CD8-positive, alpha-beta T cell (primary cell): ENCODE measurements at regions of chr1 and their contacts with region 1.

Region 1: DNA sequence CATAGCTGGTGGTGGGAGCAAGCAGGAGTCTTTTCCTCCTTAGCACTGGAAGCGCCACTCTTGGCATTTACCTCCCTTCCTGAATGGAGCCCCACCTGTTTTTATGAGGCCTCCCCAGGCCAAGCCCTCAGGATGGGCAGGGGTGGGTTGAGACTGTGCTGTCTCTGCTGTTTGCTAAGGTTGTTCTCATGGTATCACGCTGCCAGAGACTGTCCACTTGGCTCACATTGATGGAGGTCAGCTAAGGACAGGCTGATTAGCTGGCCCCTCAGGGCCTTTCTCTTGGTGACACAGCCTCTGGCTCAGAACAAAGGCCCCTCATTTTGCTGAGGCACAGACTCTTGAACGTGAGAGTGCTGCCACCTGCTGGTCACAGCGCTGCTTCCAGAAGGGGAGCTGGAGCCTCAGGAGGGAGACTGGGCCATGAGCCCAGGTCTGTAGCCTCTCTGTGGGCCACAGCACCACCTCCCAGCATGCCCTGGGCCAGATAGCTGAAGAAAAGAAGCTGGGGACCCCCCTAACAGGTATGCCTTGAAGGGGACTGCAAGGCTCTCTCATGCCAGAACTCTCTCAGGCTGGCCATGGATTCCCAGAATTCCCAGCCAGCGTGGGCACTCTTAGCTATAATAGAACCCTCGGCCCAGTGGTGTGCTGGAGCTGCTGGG is 85.6 kb downstream of the CD58 start:
- DNase-seq: peak; percentile 77 to 93 (median 87)
- ATAC-seq: peak; percentile 95
- H3K4me3 ChIP-seq: no peak overlapping the region
- H3K4me3 Mint-ChIP-seq: no peak overlapping the region
- H3K27ac ChIP-seq: no peak overlapping the region
- H3K27ac Mint-ChIP-seq: no peak overlapping the region
- H3K4me1 ChIP-seq: no peaks in the 10 kb centered on the region
- H3K4me1 Mint-ChIP-seq: no peaks in the 10 kb centered on the region
- H3K27me3 ChIP-seq: no peaks in the 10 kb centered on the region
- H3K27me3 Mint-ChIP-seq: no peaks in the 10 kb centered on the region
- CTCF ChIP-seq: peak; percentile 87

Region 2: DNA sequence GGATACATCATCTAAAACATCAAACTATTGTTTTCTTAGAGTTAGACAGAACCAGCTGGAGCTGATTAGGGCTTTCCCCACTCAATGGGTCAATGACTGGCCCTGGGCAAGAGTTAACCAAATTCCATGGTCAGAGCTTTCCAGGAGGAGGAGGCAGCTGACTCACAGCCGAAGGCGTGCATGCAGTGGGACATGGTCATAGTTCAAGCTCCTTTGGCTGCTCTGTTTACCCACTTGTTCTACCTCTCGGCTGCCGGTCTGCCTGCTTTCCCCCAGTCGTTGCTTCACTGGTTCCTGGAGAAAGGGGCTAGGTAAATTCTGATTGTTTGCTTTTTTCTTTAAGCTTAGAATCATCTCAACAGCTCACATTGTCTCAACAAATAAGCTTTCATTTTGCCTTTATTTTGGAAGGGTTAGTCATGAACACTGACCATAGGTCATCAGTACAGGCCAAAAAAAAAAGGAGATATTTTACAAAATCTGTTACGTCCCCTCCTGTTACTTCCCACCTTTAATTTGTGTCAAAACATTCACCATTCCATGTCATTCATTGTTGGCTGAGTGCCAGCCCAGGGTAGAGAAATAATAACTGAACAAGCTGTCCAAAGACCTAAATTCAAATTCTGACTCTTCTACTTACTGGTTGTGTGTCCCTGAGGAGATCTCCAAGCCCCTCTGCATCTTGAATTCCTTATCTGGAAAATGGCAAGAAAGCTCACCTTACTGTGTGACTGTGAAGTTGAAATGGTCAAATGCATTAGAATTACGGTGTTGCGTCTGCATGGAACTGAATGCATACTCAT is 362.0 kb before region 1 on chr1:
- CTCF ChIA-PET with region 1: interaction called, 22 read pairs
- POLR2A ChIA-PET with region 1: no interaction called
- intact Hi-C with region 1: no loop called
- DNase-seq: no peak
- ATAC-seq: no peak
- H3K4me3 ChIP-seq: no peak overlapping the region
- H3K4me3 Mint-ChIP-seq: no peak overlapping the region
- H3K27ac ChIP-seq: no peak overlapping the region
- H3K27ac Mint-ChIP-seq: no peak overlapping the region
- H3K4me1 ChIP-seq: peaks cover 23% of the 10 kb centered on the region
- H3K4me1 Mint-ChIP-seq: peaks cover 25% of the 10 kb centered on the region
- H3K27me3 ChIP-seq: no peaks in the 10 kb centered on the region
- H3K27me3 Mint-ChIP-seq: peaks cover 10% of the 10 kb centered on the region
- CTCF ChIP-seq: no peak

Region 3: DNA sequence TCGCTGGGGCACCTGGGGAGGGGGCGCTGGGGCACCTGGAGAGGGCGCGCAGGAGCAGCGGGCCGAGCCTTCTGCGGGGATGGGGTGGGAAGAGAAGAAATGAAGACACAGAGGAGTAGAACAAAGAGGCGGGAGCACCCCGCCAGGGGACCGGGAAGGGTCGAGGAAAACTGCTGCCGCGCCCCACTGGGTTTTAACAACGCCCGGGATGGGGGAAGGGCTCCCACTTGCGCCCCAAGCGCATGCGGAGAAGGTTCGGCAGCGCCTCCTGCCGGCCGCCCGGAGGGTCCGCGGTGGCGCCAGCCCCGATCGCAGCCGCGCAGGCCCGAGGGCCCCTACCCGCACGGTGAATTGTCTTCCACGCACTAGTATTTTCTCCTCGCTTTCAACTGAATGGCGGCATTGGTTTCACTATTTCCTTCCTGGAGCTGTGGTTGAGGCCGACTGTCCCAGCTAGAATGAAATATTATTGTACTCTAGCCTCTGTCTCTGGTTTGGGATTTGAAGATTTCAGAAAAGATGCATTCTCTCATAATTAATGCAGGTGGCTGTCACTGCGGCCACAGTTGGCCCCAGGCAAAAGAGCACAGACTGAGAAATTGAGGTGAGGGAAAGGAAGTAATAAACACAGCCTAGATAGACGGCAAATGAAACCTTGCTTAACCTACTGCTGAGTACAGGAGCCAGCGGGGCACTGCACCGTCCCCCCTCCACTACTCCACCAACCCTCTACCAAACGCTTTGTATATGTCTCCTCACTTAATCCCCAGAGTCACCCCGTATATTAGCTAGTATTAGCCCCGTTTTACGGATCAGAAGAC is 316.7 kb before region 1 on chr1:
- CTCF ChIA-PET with region 1: interaction called, 17 read pairs
- POLR2A ChIA-PET with region 1: no interaction called
- intact Hi-C with region 1: no loop called
- DNase-seq: peak; percentile 74 to 91 (median 86)
- ATAC-seq: peak; percentile 98
- H3K4me3 ChIP-seq: peak overlapping the region; percentile 61 to 88
- H3K4me3 Mint-ChIP-seq: peak overlapping the region; percentile 77
- H3K27ac ChIP-seq: peak overlapping the region; percentile 48 to 68
- H3K27ac Mint-ChIP-seq: peak overlapping the region; percentile 86
- H3K4me1 ChIP-seq: peaks cover 13% of the 10 kb centered on the region
- H3K4me1 Mint-ChIP-seq: peaks cover 12% of the 10 kb centered on the region
- H3K27me3 ChIP-seq: no peaks in the 10 kb centered on the region
- H3K27me3 Mint-ChIP-seq: no peaks in the 10 kb centered on the region
- CTCF ChIP-seq: peak; percentile 94

Region 4: DNA sequence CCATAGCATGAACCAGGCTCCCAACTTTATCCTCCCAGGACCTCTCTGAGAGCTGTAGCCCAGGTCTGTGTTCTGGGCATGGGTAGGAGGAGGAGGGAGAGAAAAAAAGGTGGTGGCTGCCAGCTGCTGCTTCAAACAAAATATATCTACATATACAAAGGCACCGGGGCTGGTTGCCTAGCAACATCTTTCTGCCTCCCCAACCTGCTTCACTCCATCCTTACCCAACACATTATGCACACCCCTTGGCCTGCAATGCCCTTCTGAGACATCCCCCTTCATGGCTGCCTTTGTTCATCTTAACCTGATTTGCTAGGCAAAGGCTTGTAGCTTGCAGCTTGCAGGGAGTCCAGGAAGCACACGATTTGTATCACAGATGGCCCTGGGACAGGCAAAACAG is 139.4 kb before region 1 on chr1:
- CTCF ChIA-PET with region 1: interaction called, 13 read pairs
- POLR2A ChIA-PET with region 1: interaction called, 3 read pairs
- intact Hi-C with region 1: no loop called
- DNase-seq: peak; percentile 18 to 89 (median 64)
- ATAC-seq: peak; percentile 93
- H3K4me3 ChIP-seq: no peak overlapping the region
- H3K4me3 Mint-ChIP-seq: no peak overlapping the region
- H3K27ac ChIP-seq: peak overlapping the region; percentile 45 to 52
- H3K27ac Mint-ChIP-seq: peak overlapping the region; percentile 90
- H3K4me1 ChIP-seq: peaks cover 42% of the 10 kb centered on the region
- H3K4me1 Mint-ChIP-seq: peaks cover 61% of the 10 kb centered on the region
- H3K27me3 ChIP-seq: peaks cover 0 to 3% of the 10 kb centered on the region in 2 experiments
- H3K27me3 Mint-ChIP-seq: no peaks in the 10 kb centered on the region
- CTCF ChIP-seq: no peak

Region 5: GRCh38 chr1:116397728-116398127 is 87.5 kb before region 1 on chr1:
- CTCF ChIA-PET with region 1: interaction called, 16 read pairs
- POLR2A ChIA-PET with region 1: no interaction called
- intact Hi-C with region 1: no loop called
- DNase-seq: no peak
- ATAC-seq: no peak
- H3K4me3 ChIP-seq: no peak overlapping the region
- H3K4me3 Mint-ChIP-seq: no peak overlapping the region
- H3K27ac ChIP-seq: no peak overlapping the region
- H3K27ac Mint-ChIP-seq: peak overlapping the region; percentile 41
- H3K4me1 ChIP-seq: peaks cover 12% of the 10 kb centered on the region
- H3K4me1 Mint-ChIP-seq: peaks cover 22% of the 10 kb centered on the region
- H3K27me3 ChIP-seq: no peaks in the 10 kb centered on the region
- H3K27me3 Mint-ChIP-seq: no peaks in the 10 kb centered on the region
- CTCF ChIP-seq: no peak

Region 6: GRCh38 chr1:116498789-116499628 is 13.8 kb after region 1 on chr1:
- CTCF ChIA-PET with region 1: interaction called, 162 read pairs
- POLR2A ChIA-PET with region 1: no interaction called
- intact Hi-C with region 1: loop called in 1 of 2 experiments (anchors 1 kb)
- DNase-seq: peak in 8 of 9 experiments; percentile 20 to 78 (median 52)
- ATAC-seq: peak; percentile 70
- H3K4me3 ChIP-seq: no peak overlapping the region
- H3K4me3 Mint-ChIP-seq: no peak overlapping the region
- H3K27ac ChIP-seq: no peak overlapping the region
- H3K27ac Mint-ChIP-seq: peak overlapping the region; percentile 57
- H3K4me1 ChIP-seq: peaks cover 11% of the 10 kb centered on the region
- H3K4me1 Mint-ChIP-seq: peaks cover 23% of the 10 kb centered on the region
- H3K27me3 ChIP-seq: no peaks in the 10 kb centered on the region
- H3K27me3 Mint-ChIP-seq: no peaks in the 10 kb centered on the region
- CTCF ChIP-seq: peak; percentile 77